Dendritic cell treated with granulocyte-macrophage colony-stimulating factor and Interleukin-4, amounts not matched to agents 40 ng/mL and 50 ng/mL, for 4 days (primary cell): ENCODE measurements at regions of chr7 and their contacts with region 1.

Region 1: GRCh38 chr7:11665357-11665756 is 166.6 kb downstream of the THSD7A start:
- H3K4me3 Mint-ChIP-seq: no peak overlapping the region
- H3K27ac Mint-ChIP-seq: no peak overlapping the region
- H3K4me1 Mint-ChIP-seq: no peaks in the 10 kb centered on the region
- H3K27me3 Mint-ChIP-seq: no peaks in the 10 kb centered on the region

Region 2: GRCh38 chr7:11579141-11579540 is 86.2 kb before region 1 on chr7:
- intact Hi-C with region 1: no loop called
- H3K4me3 Mint-ChIP-seq: no peak overlapping the region
- H3K27ac Mint-ChIP-seq: no peak overlapping the region
- H3K4me1 Mint-ChIP-seq: no peaks in the 10 kb centered on the region
- H3K27me3 Mint-ChIP-seq: no peaks in the 10 kb centered on the region

Region 3: DNA sequence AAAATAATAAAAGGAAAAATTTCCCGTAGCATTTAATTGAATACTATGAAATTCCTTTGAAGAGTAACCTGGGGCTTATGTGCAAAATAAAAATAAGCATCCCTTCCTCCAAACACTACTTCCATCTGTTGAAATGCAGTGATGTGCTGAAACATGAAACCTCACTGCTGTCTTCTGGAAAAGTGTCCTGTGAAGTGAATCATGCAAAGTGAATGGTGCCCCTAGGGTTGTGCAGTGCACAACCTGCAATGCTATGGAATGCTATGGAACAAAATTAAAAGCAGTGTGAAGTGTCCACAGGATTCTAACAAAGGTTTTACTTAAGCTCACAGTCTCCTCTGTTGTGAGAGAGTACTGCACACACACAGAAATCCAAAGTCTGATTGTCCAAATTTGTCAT is 1843.2 kb after region 1 on chr7:
- intact Hi-C with region 1: loop called (anchors 5 kb)
- H3K4me3 Mint-ChIP-seq: no peak overlapping the region
- H3K27ac Mint-ChIP-seq: no peak overlapping the region
- H3K4me1 Mint-ChIP-seq: no peaks in the 10 kb centered on the region
- H3K27me3 Mint-ChIP-seq: no peaks in the 10 kb centered on the region